Aorta (tissue), 5 donors: ENCODE measurements at regions of chr15 and their contacts with region 1.

Region 1: GRCh38 chr15:66287461-66288057 is 5.8 kb upstream of the DIS3L start:
- DNase-seq: no peak
- ATAC-seq: no peak
- H3K4me3 ChIP-seq: no peak overlapping the region
- H3K27ac ChIP-seq: no peak overlapping the region
- H3K4me1 ChIP-seq: peaks cover 0 to 3% of the 10 kb centered on the region in 2 donors
- H3K27me3 ChIP-seq: no peaks in the 10 kb centered on the region

Region 2: GRCh38 chr15:65916664-65917406 is 370.7 kb before region 1 on chr15:
- intact Hi-C with region 1: loop called (anchors 5 to 10 kb)
- DNase-seq: peak; percentile 62 to 83
- ATAC-seq: peak; percentile 76
- H3K4me3 ChIP-seq: no peak overlapping the region
- H3K27ac ChIP-seq: no peak overlapping the region
- H3K4me1 ChIP-seq: peaks cover 0 to 2% of the 10 kb centered on the region in 2 donors
- H3K27me3 ChIP-seq: no peaks in the 10 kb centered on the region

Region 3: GRCh38 chr15:66233487-66234415 is 53.8 kb before region 1 on chr15:
- intact Hi-C with region 1: no loop called
- DNase-seq: no peak
- ATAC-seq: no peak
- H3K4me3 ChIP-seq: no peak overlapping the region
- H3K27ac ChIP-seq: no peak overlapping the region
- H3K4me1 ChIP-seq: no peaks in the 10 kb centered on the region
- H3K27me3 ChIP-seq: no peaks in the 10 kb centered on the region